H1 (cell line): ENCODE measurements at regions of chr12 and their contacts with region 1.

Region 1: GRCh38 chr12:52390739-52391617 is 5.5 kb upstream of the KRT84 start:
- DNase-seq: peak in 1 of 2 experiments; percentile 66
- H3K4me3 ChIP-seq: no peak overlapping the region
- H3K27ac ChIP-seq: no peak overlapping the region
- H3K4me1 ChIP-seq: peaks cover 0 to 7% (median 1%) of the 10 kb centered on the region in 4 experiments; a peak in 2 of 7 replicates
- H3K27me3 ChIP-seq: peaks cover 0 to 4% (median 0%) of the 10 kb centered on the region in 4 experiments; a peak in 1 of 7 replicates
- CTCF ChIP-seq: peak; percentile 83 to 91 (median 84)
- EP300 ChIP-seq: no peak
- POLR2A ChIP-seq: no peak
- RAD21 ChIP-seq: peak; percentile 73 to 74

Region 2: GRCh38 chr12:52372216-52373154 is 18.5 kb before region 1 on chr12:
- CTCF ChIA-PET with region 1: interaction called, 112 read pairs
- POLR2A ChIA-PET with region 1: no interaction called
- DNase-seq: peak; percentile 57 to 84
- H3K4me3 ChIP-seq: no peak overlapping the region
- H3K27ac ChIP-seq: no peak overlapping the region
- H3K4me1 ChIP-seq: no peaks in the 10 kb centered on the region
- H3K27me3 ChIP-seq: no peaks in the 10 kb centered on the region
- CTCF ChIP-seq: peak; percentile 79 to 96 (median 94)
- EP300 ChIP-seq: no peak
- POLR2A ChIP-seq: no peak
- RAD21 ChIP-seq: peak; percentile 95 to 97

Region 3: GRCh38 chr12:52423661-52424500 is 32.9 kb after region 1 on chr12:
- CTCF ChIA-PET with region 1: interaction called, 16 read pairs
- POLR2A ChIA-PET with region 1: no interaction called
- DNase-seq: no peak
- H3K4me3 ChIP-seq: no peak overlapping the region
- H3K27ac ChIP-seq: no peak overlapping the region
- H3K4me1 ChIP-seq: no peaks in the 10 kb centered on the region; a peak in 2 of 7 replicates
- H3K27me3 ChIP-seq: no peaks in the 10 kb centered on the region
- CTCF ChIP-seq: no peak
- EP300 ChIP-seq: no peak
- POLR2A ChIP-seq: no peak
- RAD21 ChIP-seq: no peak

Region 4: GRCh38 chr12:52506858-52507715 is 116.1 kb after region 1 on chr12:
- CTCF ChIA-PET with region 1: interaction called, 36 read pairs
- POLR2A ChIA-PET with region 1: no interaction called
- DNase-seq: no peak
- H3K4me3 ChIP-seq: no peak overlapping the region
- H3K27ac ChIP-seq: no peak overlapping the region
- H3K4me1 ChIP-seq: no peaks in the 10 kb centered on the region
- H3K27me3 ChIP-seq: no peaks in the 10 kb centered on the region
- CTCF ChIP-seq: peak in 2 of 3 experiments; percentile 67 to 70; a peak in 3 of 4 replicates
- EP300 ChIP-seq: no peak
- POLR2A ChIP-seq: no peak
- RAD21 ChIP-seq: peak; percentile 35 to 59

Region 5: GRCh38 chr12:52561880-52562449 is 171.0 kb after region 1 on chr12:
- CTCF ChIA-PET with region 1: interaction called, 23 read pairs
- POLR2A ChIA-PET with region 1: no interaction called
- DNase-seq: no peak
- H3K4me3 ChIP-seq: no peak overlapping the region
- H3K27ac ChIP-seq: no peak overlapping the region
- H3K4me1 ChIP-seq: no peaks in the 10 kb centered on the region
- H3K27me3 ChIP-seq: no peaks in the 10 kb centered on the region
- CTCF ChIP-seq: peak; percentile 47 to 56 (median 56)
- EP300 ChIP-seq: no peak
- POLR2A ChIP-seq: no peak
- RAD21 ChIP-seq: peak; percentile 29 to 46; a peak in 3 of 4 replicates

Region 6: DNA sequence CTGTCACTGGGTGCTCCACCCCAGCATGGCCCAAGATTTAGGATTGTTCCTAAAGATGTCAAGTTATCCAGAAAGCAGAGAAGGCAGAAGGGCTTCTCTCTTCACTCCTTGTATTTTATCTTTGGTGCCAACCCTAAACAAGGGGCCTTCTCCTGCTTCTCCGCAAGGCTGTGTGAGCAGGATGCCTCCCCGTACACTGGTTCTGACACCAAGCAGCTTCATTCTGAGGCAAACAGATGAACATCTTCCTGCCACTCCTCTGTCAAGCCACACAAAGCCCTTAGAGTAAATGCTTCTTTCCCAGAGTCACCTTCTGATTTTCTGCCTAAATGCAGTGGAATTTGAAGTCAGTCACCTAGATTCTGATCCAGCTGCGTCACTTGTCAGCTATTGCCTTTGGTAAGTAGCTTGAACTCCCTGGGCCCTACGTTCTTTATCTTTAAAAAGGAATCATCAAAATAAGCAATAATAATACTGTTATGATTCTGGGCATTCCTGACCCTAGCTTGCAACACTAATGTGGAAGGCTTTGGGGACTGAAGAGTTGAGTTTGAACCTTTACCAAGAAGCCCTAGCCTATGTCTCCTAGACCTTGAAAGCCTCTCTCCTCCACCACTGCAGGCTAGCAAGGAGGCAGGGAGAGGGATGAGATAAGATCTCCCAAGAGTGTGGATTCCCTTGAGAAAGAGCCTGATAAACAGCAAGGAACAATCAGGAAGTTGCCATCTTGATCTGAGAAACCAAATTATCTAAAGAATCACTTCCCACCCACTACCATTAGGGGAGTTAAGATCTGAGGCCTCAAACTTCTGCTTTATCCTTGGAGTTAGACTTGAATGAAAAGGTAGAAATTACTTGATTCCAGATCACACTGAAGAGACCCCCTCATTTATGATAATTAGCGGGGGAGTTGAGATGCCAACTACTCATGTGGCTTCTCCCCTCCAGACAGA is 221.7 kb after region 1 on chr12:
- CTCF ChIA-PET with region 1: interaction called, 13 read pairs
- POLR2A ChIA-PET with region 1: no interaction called
- DNase-seq: no peak
- H3K4me3 ChIP-seq: no peak overlapping the region
- H3K27ac ChIP-seq: no peak overlapping the region
- H3K4me1 ChIP-seq: peaks cover 0 to 3% (median 0%) of the 10 kb centered on the region in 4 experiments; a peak in 1 of 7 replicates
- H3K27me3 ChIP-seq: no peaks in the 10 kb centered on the region
- CTCF ChIP-seq: no peak
- EP300 ChIP-seq: no peak
- POLR2A ChIP-seq: no peak
- RAD21 ChIP-seq: no peak

Region 7: DNA sequence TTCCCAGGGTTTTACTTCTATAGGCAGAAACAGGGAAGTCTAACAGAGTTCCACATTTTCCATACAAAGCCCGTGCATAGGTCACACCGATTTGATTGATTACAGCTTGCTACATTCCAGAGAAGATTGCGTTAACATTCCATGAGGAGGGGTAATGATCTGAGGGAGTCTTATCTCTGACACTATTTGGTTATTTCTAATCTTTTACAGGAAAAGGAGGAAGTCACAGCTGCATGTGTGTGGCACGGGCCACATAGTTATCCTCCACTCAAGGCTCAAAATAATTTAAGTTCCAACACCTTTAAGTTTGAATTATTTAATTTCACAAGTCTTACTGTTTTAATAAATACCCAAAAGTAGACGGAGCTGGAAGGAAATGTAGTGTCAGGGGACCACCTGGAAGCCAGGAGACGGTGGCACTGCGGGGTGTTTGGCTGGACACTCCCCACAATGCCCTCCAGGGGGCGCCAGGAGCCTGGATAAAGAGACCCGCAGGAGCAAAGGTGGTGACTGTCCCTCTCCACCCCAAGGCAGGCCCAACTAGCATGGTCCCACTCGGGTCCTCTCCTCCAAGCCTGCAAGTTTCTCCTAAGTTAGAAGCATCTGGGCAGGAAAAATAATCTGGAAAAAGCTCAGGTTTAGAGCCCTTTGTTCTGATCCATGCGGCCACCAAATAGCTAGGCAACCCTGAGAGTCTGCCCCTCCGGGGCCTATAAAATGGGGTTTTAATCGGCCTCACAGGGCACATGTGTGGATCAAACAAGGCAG is 493.7 kb after region 1 on chr12:
- CTCF ChIA-PET with region 1: interaction called, 85 read pairs
- POLR2A ChIA-PET with region 1: no interaction called
- DNase-seq: peak in 1 of 2 experiments; percentile 98
- H3K4me3 ChIP-seq: no peak overlapping the region
- H3K27ac ChIP-seq: no peak overlapping the region
- H3K4me1 ChIP-seq: no peaks in the 10 kb centered on the region
- H3K27me3 ChIP-seq: no peaks in the 10 kb centered on the region; a peak in 1 of 7 replicates
- CTCF ChIP-seq: peak; percentile 83 to 98 (median 88)
- EP300 ChIP-seq: no peak
- POLR2A ChIP-seq: no peak
- RAD21 ChIP-seq: peak; percentile 99